Endothelial cell of umbilical vein (primary cell): ENCODE measurements at regions of chr7 and their contacts with region 1.

Region 1: GRCh38 chr7:20834656-20835055 is 48.0 kb upstream of the SP8 start:
- DNase-seq: no peak
- H3K4me3 ChIP-seq: no peak overlapping the region
- H3K27ac ChIP-seq: no peak overlapping the region
- H3K4me1 ChIP-seq: no peaks in the 10 kb centered on the region
- H3K27me3 ChIP-seq: no peaks in the 10 kb centered on the region
- CTCF ChIP-seq: no peak
- POLR2A ChIP-seq: no peak

Region 2: DNA sequence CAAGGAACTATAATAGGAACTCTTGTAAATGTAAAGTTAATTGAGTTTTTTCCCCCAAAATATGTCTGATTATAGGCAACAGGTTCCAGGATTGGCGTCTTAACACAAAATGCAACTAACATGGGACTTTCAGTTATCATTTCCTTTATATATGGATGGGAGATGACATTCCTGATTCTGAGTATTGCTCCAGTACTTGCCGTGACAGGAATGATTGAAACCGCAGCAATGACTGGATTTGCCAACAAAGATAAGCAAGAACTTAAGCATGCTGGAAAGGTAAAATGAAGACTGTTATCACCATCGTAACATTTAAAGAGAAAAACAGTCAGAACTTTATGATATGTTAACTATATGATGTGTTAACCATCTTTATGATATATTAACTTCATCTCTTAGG is 111.7 kb before region 1 on chr7:
- CTCF ChIA-PET with region 1: no interaction called
- POLR2A ChIA-PET with region 1: no interaction called
- dilution Hi-C with region 1: no loop called
- intact Hi-C with region 1: no loop called
- DNase-seq: no peak
- H3K4me3 ChIP-seq: no peak overlapping the region
- H3K27ac ChIP-seq: no peak overlapping the region
- H3K4me1 ChIP-seq: no peaks in the 10 kb centered on the region
- H3K27me3 ChIP-seq: no peaks in the 10 kb centered on the region
- CTCF ChIP-seq: no peak
- POLR2A ChIP-seq: no peak

Region 3: GRCh38 chr7:20778063-20778721 is 56.5 kb before region 1 on chr7:
- CTCF ChIA-PET with region 1: interaction called, 3 read pairs
- POLR2A ChIA-PET with region 1: no interaction called
- dilution Hi-C with region 1: no loop called
- intact Hi-C with region 1: loop called (anchors 1 kb)
- DNase-seq: peak; percentile 30
- H3K4me3 ChIP-seq: peak overlapping the region in 2 of 3 experiments; percentile 30 to 46
- H3K27ac ChIP-seq: no peak overlapping the region
- H3K4me1 ChIP-seq: peaks cover 5% of the 10 kb centered on the region
- H3K27me3 ChIP-seq: peaks cover 54 to 86% of the 10 kb centered on the region in 2 experiments
- CTCF ChIP-seq: peak; percentile 72 to 78
- POLR2A ChIP-seq: no peak